ENCODE measurements at regions of chr19 and their contacts with region 1.

Region 1: GRCh38 chr19:14529254-14530004 is at the start of gene TECR:
- DNase-seq: peak; percentile 100
- H3K4me3 ChIP-seq: peak within 1 kb of the TSS; percentile 85
- H3K27ac ChIP-seq: peak within 1 kb of the TSS; percentile 54
- H3K4me1 ChIP-seq: peaks cover 38% of the 10 kb centered on the region
- CTCF ChIP-seq: no peak
- total RNA-seq, gene TECR: 52.3 and 81.4 TPM in 2 replicates

Region 2: GRCh38 chr19:14517840-14518505 is 11.5 kb before region 1 on chr19 and contains the start of gene DNAJB1:
- CTCF ChIA-PET with region 1: no interaction called
- POLR2A ChIA-PET with region 1: interaction called, 3 read pairs
- intact Hi-C with region 1: loop called (anchors 1 kb)
- DNase-seq: peak; percentile 77
- H3K4me3 ChIP-seq: peak within 1 kb of the TSS; percentile 93
- H3K27ac ChIP-seq: peak within 1 kb of the TSS; percentile 76
- H3K4me1 ChIP-seq: peaks cover 56% of the 10 kb centered on the region
- CTCF ChIP-seq: no peak
- total RNA-seq, gene DNAJB1: 62.9 and 76.7 TPM in 2 replicates

Region 3: GRCh38 chr19:14689598-14690503 is 160.4 kb after region 1 on chr19 and contains the start of gene ZNF333:
- CTCF ChIA-PET with region 1: no interaction called
- POLR2A ChIA-PET with region 1: no interaction called
- intact Hi-C with region 1: loop called (anchors 1 kb)
- DNase-seq: peak; percentile 95
- H3K4me3 ChIP-seq: peak within 1 kb of the TSS; percentile 80
- H3K27ac ChIP-seq: peak within 1 kb of the TSS; percentile 86
- H3K4me1 ChIP-seq: peaks cover 49% of the 10 kb centered on the region
- CTCF ChIP-seq: no peak
- total RNA-seq, gene ZNF333: 26.1 and 27.3 TPM in 2 replicates

Measured in OCI-LY7 (cell line).